ENCODE measurements at regions of chr6 and their contacts with region 1.

Region 1: DNA sequence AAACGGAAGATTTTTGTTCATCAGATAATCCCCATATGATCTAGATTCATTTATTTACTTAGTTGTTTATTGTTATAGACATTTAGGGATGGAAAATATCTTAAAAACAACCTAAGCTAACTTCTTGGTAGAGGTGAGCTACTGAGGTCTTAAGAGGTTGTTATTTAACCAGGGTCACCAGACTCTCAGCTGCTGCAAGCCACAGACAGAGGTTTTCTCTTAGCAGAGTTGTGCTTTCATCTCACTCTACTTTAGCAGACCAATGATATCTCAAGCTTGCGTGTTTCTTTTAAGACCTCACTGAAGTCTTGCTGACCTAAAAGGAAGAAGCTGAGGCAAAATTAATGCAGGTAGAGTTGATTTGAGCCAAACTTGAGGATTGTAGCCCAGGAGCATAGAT is 43.6 kb downstream of the NCOA7 start:
- DNase-seq: no peak
- H3K4me3 Mint-ChIP-seq: no peak overlapping the region
- H3K27ac Mint-ChIP-seq: no peak overlapping the region
- H3K4me1 Mint-ChIP-seq: peaks cover 34% of the 10 kb centered on the region
- H3K27me3 Mint-ChIP-seq: no peaks in the 10 kb centered on the region

Region 2: GRCh38 chr6:125325586-125325985 is 508.8 kb before region 1 on chr6:
- CTCF ChIA-PET with region 1: no interaction called
- intact Hi-C with region 1: no loop called
- DNase-seq: no peak
- H3K4me3 Mint-ChIP-seq: no peak overlapping the region
- H3K27ac Mint-ChIP-seq: no peak overlapping the region
- H3K4me1 Mint-ChIP-seq: no peaks in the 10 kb centered on the region
- H3K27me3 Mint-ChIP-seq: peaks cover 6% of the 10 kb centered on the region

Region 3: DNA sequence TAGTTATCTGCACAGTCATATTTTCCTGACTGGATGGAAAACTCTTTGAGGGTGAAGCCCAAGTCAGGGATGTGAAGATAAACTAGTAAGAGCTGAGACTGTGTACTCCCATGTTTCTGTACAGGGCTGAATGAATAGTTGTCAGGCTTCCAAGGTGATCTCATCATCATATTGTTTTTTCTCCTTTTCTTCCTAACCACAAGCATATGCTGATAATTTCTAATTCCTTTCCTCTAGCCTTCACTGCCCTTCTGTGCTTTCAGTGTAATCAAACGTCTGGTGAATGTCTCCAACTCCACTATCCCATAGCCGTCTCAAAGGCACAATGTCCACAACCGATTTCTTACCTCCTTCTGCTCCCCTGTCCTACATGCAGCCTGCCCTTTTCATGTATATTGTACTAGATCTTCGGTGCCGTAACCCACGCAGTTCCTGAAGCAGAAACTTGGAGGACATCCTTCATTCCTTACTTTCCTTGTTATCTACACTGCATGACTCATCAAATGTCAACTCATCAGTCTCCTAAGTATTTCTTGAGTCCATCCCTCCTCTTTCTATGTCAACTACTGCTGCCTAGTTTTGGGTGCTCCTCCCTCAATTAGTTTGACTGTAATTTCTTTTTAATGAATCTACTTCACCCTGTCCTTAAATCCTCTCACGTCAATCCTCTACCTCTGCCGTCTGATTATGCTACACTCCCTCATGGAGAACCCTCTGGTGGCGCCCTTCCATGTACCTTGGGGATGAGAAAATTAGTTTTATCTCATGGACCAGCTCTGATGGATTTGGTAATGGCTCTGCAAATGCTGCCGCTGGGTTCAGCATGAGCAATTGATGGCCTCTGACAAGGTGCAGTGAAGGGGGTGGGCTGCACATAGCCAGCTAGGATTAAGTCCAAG is 21.7 kb before region 1 on chr6:
- CTCF ChIA-PET with region 1: interaction called, 5 read pairs
- intact Hi-C with region 1: loop called (anchors 2 kb)
- DNase-seq: no peak
- H3K4me3 Mint-ChIP-seq: no peak overlapping the region
- H3K27ac Mint-ChIP-seq: no peak overlapping the region
- H3K4me1 Mint-ChIP-seq: peaks cover 57% of the 10 kb centered on the region
- H3K27me3 Mint-ChIP-seq: no peaks in the 10 kb centered on the region